ENCODE measurements at regions of chr20 and their contacts with region 1.

Region 1: DNA sequence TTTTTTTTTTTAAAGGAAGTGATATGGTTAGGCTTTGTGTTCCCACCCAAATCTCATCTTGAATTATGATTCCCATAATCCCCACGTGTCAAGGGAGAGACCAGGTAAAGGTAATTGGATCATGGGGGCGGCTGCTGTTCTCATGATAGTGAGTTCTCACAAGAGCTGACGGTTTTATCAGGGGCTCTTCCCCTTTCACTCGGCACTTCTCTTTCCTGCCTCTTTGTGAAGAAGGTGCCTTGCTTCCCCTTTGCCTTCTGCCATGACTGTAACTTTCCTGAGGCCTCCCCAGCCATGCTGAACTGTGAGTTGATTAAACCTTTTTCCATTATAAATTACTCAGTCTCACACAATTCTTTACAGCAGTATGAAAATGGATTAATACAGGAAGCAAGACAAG is 64.3 kb downstream of the ZFP64 start:
- DNase-seq: no peak
- ATAC-seq: no peak
- H3K4me3 ChIP-seq: no peak overlapping the region
- H3K4me1 ChIP-seq: no peaks in the 10 kb centered on the region
- CTCF ChIP-seq: no peak

Region 2: GRCh38 chr20:51831866-51832265 is 295.4 kb before region 1 on chr20:
- intact Hi-C with region 1: no loop called
- DNase-seq: no peak
- ATAC-seq: no peak
- H3K4me3 ChIP-seq: no peak overlapping the region
- H3K4me1 ChIP-seq: no peaks in the 10 kb centered on the region
- CTCF ChIP-seq: no peak

Region 3: GRCh38 chr20:51910321-51911053 is 216.8 kb before region 1 on chr20:
- intact Hi-C with region 1: no loop called
- DNase-seq: no peak
- ATAC-seq: no peak
- H3K4me3 ChIP-seq: no peak overlapping the region
- H3K4me1 ChIP-seq: no peaks in the 10 kb centered on the region
- CTCF ChIP-seq: no peak

Region 4: GRCh38 chr20:52379723-52380336 is 252.5 kb after region 1 on chr20:
- intact Hi-C with region 1: loop called (anchors 5 to 10 kb)
- DNase-seq: peak in 2 of 3 donors; percentile 55 to 72
- ATAC-seq: no peak
- H3K4me3 ChIP-seq: no peak overlapping the region
- H3K4me1 ChIP-seq: no peaks in the 10 kb centered on the region
- CTCF ChIP-seq: peak; percentile 91

Measured in mucosa of descending colon (tissue), 3 donors.